Lower leg skin (tissue), 4 donors: ENCODE measurements at regions of chr4 and their contacts with region 1.

Region 1: GRCh38 chr4:147368948-147369347 is 111.9 kb upstream of the EDNRA start:
- DNase-seq: no peak
- H3K4me3 ChIP-seq: no peak overlapping the region
- CTCF ChIP-seq: no peak
- POLR2A ChIP-seq: no peak

Region 2: DNA sequence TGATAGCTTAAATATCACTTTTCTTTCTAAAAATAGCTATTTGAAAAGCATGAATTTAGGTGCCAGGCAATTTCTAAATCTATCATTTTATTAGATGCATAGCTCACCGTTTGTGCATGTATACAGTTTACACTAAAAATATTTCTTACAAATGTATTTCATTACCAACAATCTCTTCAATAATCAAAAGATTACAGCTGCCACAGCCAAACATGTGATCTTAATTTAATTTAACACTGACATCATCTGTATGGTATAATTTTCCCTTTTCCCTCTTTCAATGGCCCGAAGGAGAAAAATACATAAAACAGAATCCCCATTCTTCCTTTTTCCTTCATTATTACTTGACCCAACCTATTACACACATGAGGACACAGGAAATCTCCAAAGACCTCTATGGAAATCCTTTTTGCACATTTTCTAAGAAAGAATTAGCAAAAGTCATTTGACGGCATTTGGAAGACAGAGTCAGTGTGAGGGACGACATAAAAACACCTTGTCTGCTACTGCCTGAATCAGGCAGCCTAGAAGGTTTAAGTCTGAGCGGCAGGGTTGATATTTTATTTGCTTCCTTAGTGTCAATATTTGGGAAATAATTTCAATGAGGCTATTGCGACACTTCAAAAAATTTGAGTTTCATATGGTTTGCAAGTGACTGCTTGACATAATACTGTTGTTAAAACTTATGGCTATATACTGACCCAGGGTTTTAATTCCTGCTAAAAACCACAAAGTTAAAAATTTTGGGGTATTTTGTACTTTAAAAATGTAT is 534.5 kb before region 1 on chr4:
- intact Hi-C with region 1: no loop called
- DNase-seq: no peak
- H3K4me3 ChIP-seq: no peak overlapping the region
- CTCF ChIP-seq: no peak
- POLR2A ChIP-seq: no peak

Region 3: GRCh38 chr4:146957237-146957636 is 411.7 kb before region 1 on chr4:
- intact Hi-C with region 1: no loop called
- DNase-seq: no peak
- H3K4me3 ChIP-seq: no peak overlapping the region
- CTCF ChIP-seq: no peak
- POLR2A ChIP-seq: no peak

Region 4: DNA sequence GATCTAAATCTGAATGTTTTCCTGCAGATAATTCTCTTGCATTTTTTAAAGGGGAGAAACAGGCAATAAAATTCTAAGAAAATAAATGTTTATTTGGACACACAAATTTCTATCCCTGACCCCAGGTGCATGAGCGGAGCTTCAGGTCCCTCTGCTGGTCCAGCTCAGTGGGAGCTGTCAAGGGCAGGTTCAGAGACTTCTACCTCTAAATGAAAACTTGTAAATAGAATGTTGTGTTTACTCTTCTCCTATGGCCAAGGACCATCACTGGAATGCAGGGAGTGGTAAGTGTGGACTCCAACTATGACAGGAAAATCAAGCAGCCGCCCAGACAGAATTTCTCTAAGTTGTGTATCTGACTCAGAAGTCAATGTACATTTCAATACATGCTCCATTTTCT is 274.7 kb before region 1 on chr4:
- intact Hi-C with region 1: no loop called
- DNase-seq: no peak
- H3K4me3 ChIP-seq: no peak overlapping the region
- CTCF ChIP-seq: no peak
- POLR2A ChIP-seq: no peak

Region 5: GRCh38 chr4:147207911-147208310 is 161.0 kb before region 1 on chr4:
- intact Hi-C with region 1: no loop called
- DNase-seq: no peak
- H3K4me3 ChIP-seq: no peak overlapping the region
- CTCF ChIP-seq: no peak
- POLR2A ChIP-seq: no peak

Region 6: GRCh38 chr4:147456706-147457105 is 87.8 kb after region 1 on chr4:
- intact Hi-C with region 1: loop called (anchors 5 kb)
- DNase-seq: no peak
- H3K4me3 ChIP-seq: no peak overlapping the region
- CTCF ChIP-seq: no peak
- POLR2A ChIP-seq: no peak